Ovary (tissue), 10 donors: ENCODE measurements at regions of chr13 and their contacts with region 1.

Region 1: GRCh38 chr13:49585220-49586157 is at the start of gene RCBTB1:
- DNase-seq: peak; percentile 49 to 76 (median 66)
- H3K4me3 ChIP-seq: peak within 1 kb of the TSS; percentile 95
- H3K27ac ChIP-seq: peak within 1 kb of the TSS; percentile 56 to 75
- H3K4me1 ChIP-seq: peaks cover 3% of the 10 kb centered on the region
- H3K27me3 ChIP-seq: no peaks in the 10 kb centered on the region
- CTCF ChIP-seq: no peak
- EP300 ChIP-seq: no peak
- POLR2A ChIP-seq: no peak
- total RNA-seq, gene RCBTB1: 5.5 to 16.6 (median 12.9) TPM

Region 2: GRCh38 chr13:49300739-49301589 is 284.5 kb before region 1 on chr13:
- intact Hi-C with region 1: loop called in 1 of 4 experiments (anchors 10 kb)
- DNase-seq: peak in 4 of 5 donors; percentile 54 to 70 (median 60)
- H3K4me3 ChIP-seq: peak overlapping the region; percentile 3
- H3K27ac ChIP-seq: peak overlapping the region in 1 of 2 donors; percentile 46
- H3K4me1 ChIP-seq: peaks cover 6% of the 10 kb centered on the region
- H3K27me3 ChIP-seq: no peaks in the 10 kb centered on the region
- CTCF ChIP-seq: peak; percentile 78 to 92 (median 91)
- EP300 ChIP-seq: no peak
- POLR2A ChIP-seq: no peak

Region 3: GRCh38 chr13:49517461-49517860 is 68.0 kb before region 1 on chr13:
- intact Hi-C with region 1: no loop called
- DNase-seq: no peak
- H3K4me3 ChIP-seq: no peak overlapping the region
- H3K27ac ChIP-seq: no peak overlapping the region
- H3K4me1 ChIP-seq: no peaks in the 10 kb centered on the region
- H3K27me3 ChIP-seq: no peaks in the 10 kb centered on the region
- CTCF ChIP-seq: no peak
- EP300 ChIP-seq: no peak
- POLR2A ChIP-seq: no peak